CD4-positive, alpha-beta memory T cell (primary cell): ENCODE measurements at regions of chr7 and their contacts with region 1.

Region 1: DNA sequence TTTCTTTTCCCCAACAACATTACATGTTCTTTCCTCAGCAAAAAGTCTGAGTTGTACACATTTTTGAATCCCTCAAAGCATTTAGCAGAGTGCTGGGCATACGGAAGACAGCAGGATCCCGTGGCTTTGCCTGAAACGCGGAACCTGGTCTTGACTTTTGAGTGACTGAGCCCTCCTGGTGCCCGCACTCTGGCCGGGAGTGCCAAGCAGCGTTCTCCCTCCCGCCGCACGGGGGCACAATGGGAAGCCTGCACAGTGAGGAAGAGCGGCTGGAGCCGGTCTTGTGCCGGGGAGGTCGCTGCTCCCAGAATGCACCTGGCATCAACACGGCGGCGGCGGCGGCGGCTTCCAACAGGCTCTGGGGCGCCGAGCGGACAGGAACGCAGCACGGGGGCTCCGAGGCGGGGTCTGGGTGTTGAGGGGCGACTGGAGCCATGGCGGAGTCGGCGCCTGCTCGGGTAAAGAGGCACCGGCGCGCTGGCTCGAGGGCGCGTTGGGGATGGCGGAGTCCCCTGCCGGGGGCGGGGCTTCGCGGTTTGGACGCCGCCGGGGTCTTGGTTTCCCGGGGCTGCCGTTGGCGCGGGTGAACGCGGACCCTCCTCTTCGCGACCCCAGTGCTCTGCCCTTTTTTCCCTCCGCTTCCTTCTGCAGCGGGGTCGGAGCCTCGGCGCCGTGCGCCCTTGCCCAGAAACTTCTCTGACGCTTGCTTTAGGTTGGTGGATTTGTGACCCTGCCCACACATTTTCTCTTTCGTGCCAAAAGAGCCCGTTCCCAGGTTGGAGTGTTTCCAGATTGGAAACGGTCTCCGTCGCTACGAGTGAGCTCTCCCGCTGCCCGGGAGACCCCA is at the start of gene ZNF212:
- DNase-seq: peak; percentile 82 to 88 (median 85)
- H3K4me3 ChIP-seq: peak within 1 kb of the TSS; percentile 89 to 98
- H3K4me3 Mint-ChIP-seq: peak within 1 kb of the TSS; percentile 91 to 94 (median 92)
- H3K27ac ChIP-seq: peak within 1 kb of the TSS; percentile 67
- H3K27ac Mint-ChIP-seq: peak within 1 kb of the TSS; percentile 79 to 93 (median 90)
- H3K4me1 ChIP-seq: peaks cover 26% of the 10 kb centered on the region
- H3K4me1 Mint-ChIP-seq: peaks cover 21 to 39% (median 32%) of the 10 kb centered on the region in 4 donors
- H3K27me3 ChIP-seq: no peaks in the 10 kb centered on the region
- H3K27me3 Mint-ChIP-seq: peaks cover 2 to 5% of the 10 kb centered on the region in 2 donors
- total RNA-seq, gene ZNF212: 21.5 to 24.0 TPM

Region 2: DNA sequence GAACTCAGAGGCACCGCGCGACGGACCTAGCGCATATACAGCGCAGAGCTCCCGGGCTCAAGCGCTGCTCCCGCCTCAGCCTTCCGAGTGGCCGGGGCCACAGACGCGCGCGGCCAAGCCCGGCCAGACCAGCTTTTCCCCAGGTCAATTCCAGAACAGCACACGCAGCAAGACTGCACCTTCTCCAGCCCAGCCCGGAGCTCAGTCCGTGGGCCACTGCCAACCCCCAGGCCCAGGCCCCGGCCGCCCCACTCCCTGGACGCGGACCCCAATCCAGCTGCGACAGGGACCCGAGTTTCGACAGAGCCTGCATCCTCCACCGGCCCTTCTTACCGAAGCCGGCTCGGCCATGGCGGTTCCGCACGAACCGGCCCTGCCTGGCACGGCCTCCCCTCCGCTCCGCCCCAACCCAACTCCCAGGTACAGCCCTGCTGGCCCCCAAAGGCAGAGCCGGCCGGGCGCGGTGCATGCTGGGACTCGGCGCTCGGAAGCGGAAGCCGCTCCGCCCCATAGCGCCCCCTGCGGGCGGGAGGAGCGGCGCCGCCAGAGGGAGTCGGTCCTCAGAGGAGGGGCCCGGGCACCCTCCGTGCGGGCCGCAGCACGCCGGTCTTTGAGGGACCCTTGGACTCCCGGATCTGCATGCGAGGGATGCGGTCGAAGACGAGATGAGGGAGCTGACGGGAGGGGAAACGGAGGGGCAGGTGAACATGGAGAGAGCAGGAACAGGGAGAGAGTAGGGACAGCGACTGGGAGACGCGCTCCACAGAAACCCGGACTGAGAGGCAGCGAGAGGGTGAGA is 113.5 kb before region 1 on chr7 and contains the start of gene ZNF425:
- CTCF ChIA-PET with region 1: interaction called, 3 read pairs
- POLR2A ChIA-PET with region 1: no interaction called
- intact Hi-C with region 1: loop called (anchors 5 kb)
- DNase-seq: peak; percentile 89 to 94 (median 91)
- H3K4me3 ChIP-seq: peak within 1 kb of the TSS; percentile 83 to 96
- H3K4me3 Mint-ChIP-seq: peak within 1 kb of the TSS; percentile 91 to 100 (median 100)
- H3K27ac ChIP-seq: peak within 1 kb of the TSS; percentile 88
- H3K27ac Mint-ChIP-seq: peak within 1 kb of the TSS; percentile 91 to 99 (median 98)
- H3K4me1 ChIP-seq: peaks cover 19% of the 10 kb centered on the region
- H3K4me1 Mint-ChIP-seq: peaks cover 15 to 35% (median 25%) of the 10 kb centered on the region in 4 donors
- H3K27me3 ChIP-seq: no peaks in the 10 kb centered on the region
- H3K27me3 Mint-ChIP-seq: no peaks in the 10 kb centered on the region
- total RNA-seq, gene ZNF425: 3.2 to 4.0 TPM

Region 3: GRCh38 chr7:149195180-149196150 is 44.1 kb before region 1 on chr7 and contains the start of gene ZNF282:
- CTCF ChIA-PET with region 1: no interaction called
- POLR2A ChIA-PET with region 1: interaction called, 3 read pairs
- intact Hi-C with region 1: loop called (anchors 2 kb)
- DNase-seq: peak; percentile 54 to 66 (median 61)
- H3K4me3 ChIP-seq: peak within 1 kb of the TSS; percentile 70 to 76
- H3K4me3 Mint-ChIP-seq: peak within 1 kb of the TSS; percentile 88 to 97 (median 91)
- H3K27ac ChIP-seq: peak within 1 kb of the TSS; percentile 68
- H3K27ac Mint-ChIP-seq: peak within 1 kb of the TSS; percentile 81 to 95 (median 89)
- H3K4me1 ChIP-seq: peaks cover 23% of the 10 kb centered on the region
- H3K4me1 Mint-ChIP-seq: peaks cover 18 to 48% (median 32%) of the 10 kb centered on the region in 4 donors
- H3K27me3 ChIP-seq: no peaks in the 10 kb centered on the region
- H3K27me3 Mint-ChIP-seq: no peaks in the 10 kb centered on the region
- total RNA-seq, gene ZNF282: 19.1 to 20.7 TPM

Region 4: DNA sequence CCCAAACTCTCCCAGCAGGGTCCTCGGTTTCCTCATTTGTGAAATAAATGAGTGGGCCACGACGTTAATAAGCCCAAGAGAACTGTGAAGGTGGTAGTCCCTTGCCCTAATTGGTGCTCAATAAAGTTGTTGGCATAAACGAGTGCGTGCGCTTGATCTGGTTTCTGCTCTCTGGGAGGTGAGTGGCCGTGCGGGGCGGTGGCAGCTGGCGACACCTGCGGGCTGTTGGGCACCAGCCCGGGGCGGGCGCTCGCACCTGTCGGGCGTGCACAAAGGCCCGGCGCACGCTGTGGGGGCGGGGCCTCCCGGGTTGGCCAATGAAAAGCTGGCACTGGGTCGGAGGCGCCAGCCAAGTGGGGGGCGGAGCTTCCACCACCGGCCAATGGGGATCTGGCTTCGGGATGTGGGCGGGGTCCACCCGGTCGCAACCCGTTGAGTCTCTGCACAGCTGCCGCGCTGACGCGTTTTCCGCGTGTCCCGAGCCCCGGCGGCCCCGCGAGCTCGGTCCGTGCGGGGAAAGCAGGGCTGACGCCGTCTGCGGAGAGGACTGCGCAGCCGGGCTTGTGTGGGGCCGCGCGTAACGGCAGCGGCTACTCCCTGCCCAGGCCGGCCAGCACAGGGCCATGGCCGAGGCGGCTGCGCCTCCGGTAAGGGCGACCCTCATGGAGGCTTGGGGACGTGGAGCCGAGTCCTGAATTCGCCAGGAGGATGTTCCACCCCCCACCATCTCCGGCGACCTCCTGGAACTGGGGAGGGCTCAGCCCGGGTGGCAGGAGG is 45.5 kb after region 1 on chr7:
- CTCF ChIA-PET with region 1: interaction called, 9 read pairs
- POLR2A ChIA-PET with region 1: interaction called, 3 read pairs
- intact Hi-C with region 1: loop called (anchors 1 kb)
- DNase-seq: peak; percentile 96 to 98 (median 98)
- H3K4me3 ChIP-seq: peak overlapping the region; percentile 49 to 72
- H3K4me3 Mint-ChIP-seq: peak overlapping the region; percentile 80 to 96 (median 90)
- H3K27ac ChIP-seq: peak overlapping the region; percentile 57
- H3K27ac Mint-ChIP-seq: peak overlapping the region; percentile 87 to 93 (median 91)
- H3K4me1 ChIP-seq: peaks cover 38% of the 10 kb centered on the region
- H3K4me1 Mint-ChIP-seq: peaks cover 26 to 53% (median 40%) of the 10 kb centered on the region in 4 donors
- H3K27me3 ChIP-seq: no peaks in the 10 kb centered on the region
- H3K27me3 Mint-ChIP-seq: no peaks in the 10 kb centered on the region

Region 5: DNA sequence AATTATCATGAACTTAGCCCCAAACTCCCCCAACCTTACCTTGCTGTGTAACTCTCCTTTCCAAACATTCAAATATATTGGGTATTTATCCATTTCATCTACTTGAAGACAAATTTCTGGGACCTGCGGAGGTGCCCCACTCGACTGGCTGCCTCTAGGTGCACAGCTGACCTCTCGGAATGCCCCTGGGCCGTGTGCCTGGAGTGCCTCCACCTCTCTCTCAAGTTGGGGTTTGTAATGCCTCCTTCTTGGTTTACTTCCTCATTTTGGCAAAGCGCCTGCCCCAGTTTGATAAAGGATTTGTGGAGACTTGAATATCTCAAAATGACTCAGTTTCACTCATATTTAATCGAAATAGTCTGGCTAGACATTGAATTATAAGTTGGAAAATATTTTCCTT is 204.7 kb after region 1 on chr7:
- CTCF ChIA-PET with region 1: no interaction called
- POLR2A ChIA-PET with region 1: no interaction called
- intact Hi-C with region 1: no loop called
- DNase-seq: no peak
- H3K4me3 ChIP-seq: no peak overlapping the region
- H3K4me3 Mint-ChIP-seq: no peak overlapping the region
- H3K27ac ChIP-seq: no peak overlapping the region
- H3K27ac Mint-ChIP-seq: peak overlapping the region in 1 of 7 donors; percentile 32
- H3K4me1 ChIP-seq: peaks cover 10% of the 10 kb centered on the region
- H3K4me1 Mint-ChIP-seq: peaks cover 10 to 16% (median 12%) of the 10 kb centered on the region in 4 donors
- H3K27me3 ChIP-seq: no peaks in the 10 kb centered on the region
- H3K27me3 Mint-ChIP-seq: no peaks in the 10 kb centered on the region

Region 6: DNA sequence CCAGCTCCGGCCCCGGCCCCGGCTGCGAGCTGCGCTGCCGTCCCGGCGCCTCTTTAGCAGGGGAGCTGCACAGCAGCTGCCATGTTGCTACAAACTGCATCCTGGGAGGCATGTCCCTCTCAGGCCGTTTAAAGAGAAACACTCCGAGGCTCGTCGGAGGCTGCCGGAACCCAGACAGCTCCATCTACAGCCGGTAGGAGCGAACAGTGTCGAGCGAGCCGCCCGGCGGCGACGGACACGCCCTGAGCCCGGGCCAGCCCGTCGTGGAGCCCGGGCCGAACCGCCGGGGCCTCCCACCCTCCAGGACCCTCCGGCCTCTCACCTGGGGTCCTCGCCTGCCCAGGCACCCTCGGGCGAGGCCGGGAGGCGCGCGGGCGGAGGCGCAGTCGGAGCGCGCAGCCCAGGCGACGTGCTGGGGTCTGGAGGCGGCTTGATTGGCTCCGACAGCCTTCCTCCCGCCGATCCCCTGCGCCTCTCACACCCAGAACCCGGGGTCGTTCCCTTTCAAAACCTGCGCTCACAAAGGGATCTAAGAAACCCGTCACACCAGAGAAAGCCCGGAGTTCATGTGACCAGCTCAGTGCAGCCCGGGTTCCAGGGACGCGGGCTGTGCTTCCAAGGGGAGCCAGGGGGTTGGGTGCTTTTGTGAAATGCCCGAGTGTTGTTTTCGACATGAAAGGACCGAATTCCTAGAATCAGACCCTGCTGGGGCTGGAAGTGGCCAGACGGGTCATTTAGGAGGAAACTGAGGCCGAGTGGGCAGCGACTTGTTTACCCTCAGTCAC is 221.1 kb after region 1 on chr7 and contains the start of gene ZNF777:
- CTCF ChIA-PET with region 1: no interaction called
- POLR2A ChIA-PET with region 1: no interaction called
- intact Hi-C with region 1: loop called (anchors 1 kb)
- DNase-seq: peak; percentile 80 to 88 (median 83)
- H3K4me3 ChIP-seq: peak within 1 kb of the TSS; percentile 73 to 74
- H3K4me3 Mint-ChIP-seq: peak within 1 kb of the TSS; percentile 86 to 91 (median 88)
- H3K27ac ChIP-seq: peak within 1 kb of the TSS; percentile 62
- H3K27ac Mint-ChIP-seq: peak within 1 kb of the TSS; percentile 48 to 90 (median 87)
- H3K4me1 ChIP-seq: peaks cover 24% of the 10 kb centered on the region
- H3K4me1 Mint-ChIP-seq: peaks cover 16 to 33% (median 28%) of the 10 kb centered on the region in 4 donors
- H3K27me3 ChIP-seq: peaks cover 6% of the 10 kb centered on the region
- H3K27me3 Mint-ChIP-seq: peaks cover 0 to 3% of the 10 kb centered on the region in 2 donors
- total RNA-seq, gene ZNF777: 15.9 to 16.8 TPM